Naive thymus-derived CD8-positive, alpha-beta T cell (primary cell): ENCODE measurements at regions of chr2 and their contacts with region 1.

Region 1: GRCh38 chr2:85327822-85328617 is at the start of gene TGOLN2:
- DNase-seq: peak; percentile 89 to 96 (median 94)
- ATAC-seq: peak; percentile 83 to 87
- H3K4me3 Mint-ChIP-seq: peak within 1 kb of the TSS; percentile 96 to 100 (median 99)
- H3K27ac Mint-ChIP-seq: peak within 1 kb of the TSS; percentile 97 to 100 (median 100)
- H3K4me1 Mint-ChIP-seq: peaks cover 27 to 53% (median 42%) of the 10 kb centered on the region in 4 donors
- H3K27me3 Mint-ChIP-seq: no peaks in the 10 kb centered on the region
- polyA plus RNA-seq, gene TGOLN2: 55.6 to 80.0 (median 65.1) TPM

Region 2: GRCh38 chr2:84970868-84971509 is 357.0 kb before region 1 on chr2 and contains the start of gene KCMF1:
- POLR2A ChIA-PET with region 1: interaction called, 12 read pairs
- DNase-seq: peak; percentile 38 to 80 (median 64)
- ATAC-seq: peak; percentile 52 to 53
- H3K4me3 Mint-ChIP-seq: peak within 1 kb of the TSS; percentile 92 to 100 (median 99)
- H3K27ac Mint-ChIP-seq: peak within 1 kb of the TSS; percentile 97 to 100 (median 99)
- H3K4me1 Mint-ChIP-seq: peaks cover 28 to 67% (median 62%) of the 10 kb centered on the region in 4 donors
- H3K27me3 Mint-ChIP-seq: no peaks in the 10 kb centered on the region
- polyA plus RNA-seq, gene KCMF1: 13.3 to 30.2 (median 28.1) TPM

Region 3: GRCh38 chr2:85175369-85176299 is 152.4 kb before region 1 on chr2:
- POLR2A ChIA-PET with region 1: no interaction called
- DNase-seq: no peak
- ATAC-seq: no peak
- H3K4me3 Mint-ChIP-seq: no peak overlapping the region
- H3K27ac Mint-ChIP-seq: peak overlapping the region in 1 of 10 donors; percentile 1
- H3K4me1 Mint-ChIP-seq: peaks cover 0 to 2% (median 0%) of the 10 kb centered on the region in 4 donors
- H3K27me3 Mint-ChIP-seq: peaks cover 0 to 9% (median 4%) of the 10 kb centered on the region in 5 donors

Region 4: GRCh38 chr2:85302121-85302520 is 25.9 kb before region 1 on chr2:
- POLR2A ChIA-PET with region 1: interaction called, 17 read pairs
- DNase-seq: no peak
- ATAC-seq: no peak
- H3K4me3 Mint-ChIP-seq: no peak overlapping the region
- H3K27ac Mint-ChIP-seq: no peak overlapping the region
- H3K4me1 Mint-ChIP-seq: peaks cover 5 to 23% (median 14%) of the 10 kb centered on the region in 4 donors
- H3K27me3 Mint-ChIP-seq: peaks cover 0 to 5% (median 0%) of the 10 kb centered on the region in 5 donors

Region 5: GRCh38 chr2:85308896-85309555 is 19.0 kb before region 1 on chr2:
- POLR2A ChIA-PET with region 1: interaction called, 77 read pairs
- DNase-seq: peak in 1 of 10 donors; percentile 22
- ATAC-seq: peak; percentile 22 to 30
- H3K4me3 Mint-ChIP-seq: peak overlapping the region; percentile 77 to 91 (median 84)
- H3K27ac Mint-ChIP-seq: peak overlapping the region; percentile 92 to 98 (median 96)
- H3K4me1 Mint-ChIP-seq: peaks cover 24 to 65% (median 46%) of the 10 kb centered on the region in 4 donors
- H3K27me3 Mint-ChIP-seq: no peaks in the 10 kb centered on the region

Region 6: DNA sequence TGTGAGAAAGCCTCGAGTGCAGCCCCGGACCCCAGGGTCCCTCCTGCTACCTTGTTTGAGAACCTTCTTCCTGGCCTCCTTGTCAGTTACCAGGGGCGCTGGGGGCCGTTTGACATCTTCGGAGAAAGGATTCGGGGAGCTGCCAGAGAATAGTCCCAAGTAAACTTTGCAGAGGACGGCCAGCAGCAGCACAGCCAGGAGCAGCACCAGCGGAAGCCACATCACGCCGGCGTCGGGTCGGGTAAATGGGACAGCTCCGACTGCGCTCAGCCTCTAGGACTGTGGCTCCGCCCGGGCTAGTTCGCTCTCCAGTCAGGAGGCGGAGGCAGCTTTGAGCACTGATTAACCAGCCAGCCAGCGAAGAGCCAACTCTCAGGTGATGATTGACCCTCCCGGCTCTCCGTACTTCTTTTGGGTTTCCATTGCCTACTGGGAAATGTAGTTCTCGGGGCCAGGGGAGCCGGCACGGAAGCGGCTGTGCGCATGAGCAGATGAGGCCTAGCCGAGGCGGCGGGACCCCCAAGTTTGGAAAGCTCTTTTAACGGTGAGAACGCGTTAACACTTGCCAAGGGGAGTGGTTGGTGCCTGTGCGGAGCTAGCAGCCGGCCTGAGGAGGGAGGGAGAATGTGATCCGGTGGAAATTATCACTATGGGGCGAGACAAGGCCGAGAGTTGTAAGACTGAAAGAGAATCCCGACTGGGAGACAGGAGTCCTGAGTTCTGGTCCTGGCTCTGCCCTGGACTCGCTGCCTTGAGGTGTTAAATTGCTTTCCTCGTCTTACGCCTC is 26.5 kb after region 1 on chr2 and contains the starts of genes ELMOD3 and RETSAT:
- POLR2A ChIA-PET with region 1: interaction called, 122 read pairs
- DNase-seq: peak; percentile 85 to 99 (median 98)
- ATAC-seq: peak; percentile 98 to 99
- H3K4me3 Mint-ChIP-seq: peak within 1 kb of the TSS; percentile 89 to 100 (median 98)
- H3K27ac Mint-ChIP-seq: peak within 1 kb of the TSS; percentile 95 to 100 (median 99)
- H3K4me1 Mint-ChIP-seq: peaks cover 22 to 68% (median 53%) of the 10 kb centered on the region in 4 donors
- H3K27me3 Mint-ChIP-seq: no peaks in the 10 kb centered on the region
- polyA plus RNA-seq, gene ELMOD3: 6.3 to 14.5 (median 11.8) TPM
- polyA plus RNA-seq, gene RETSAT: 6.6 to 15.1 (median 9.9) TPM

Region 7: DNA sequence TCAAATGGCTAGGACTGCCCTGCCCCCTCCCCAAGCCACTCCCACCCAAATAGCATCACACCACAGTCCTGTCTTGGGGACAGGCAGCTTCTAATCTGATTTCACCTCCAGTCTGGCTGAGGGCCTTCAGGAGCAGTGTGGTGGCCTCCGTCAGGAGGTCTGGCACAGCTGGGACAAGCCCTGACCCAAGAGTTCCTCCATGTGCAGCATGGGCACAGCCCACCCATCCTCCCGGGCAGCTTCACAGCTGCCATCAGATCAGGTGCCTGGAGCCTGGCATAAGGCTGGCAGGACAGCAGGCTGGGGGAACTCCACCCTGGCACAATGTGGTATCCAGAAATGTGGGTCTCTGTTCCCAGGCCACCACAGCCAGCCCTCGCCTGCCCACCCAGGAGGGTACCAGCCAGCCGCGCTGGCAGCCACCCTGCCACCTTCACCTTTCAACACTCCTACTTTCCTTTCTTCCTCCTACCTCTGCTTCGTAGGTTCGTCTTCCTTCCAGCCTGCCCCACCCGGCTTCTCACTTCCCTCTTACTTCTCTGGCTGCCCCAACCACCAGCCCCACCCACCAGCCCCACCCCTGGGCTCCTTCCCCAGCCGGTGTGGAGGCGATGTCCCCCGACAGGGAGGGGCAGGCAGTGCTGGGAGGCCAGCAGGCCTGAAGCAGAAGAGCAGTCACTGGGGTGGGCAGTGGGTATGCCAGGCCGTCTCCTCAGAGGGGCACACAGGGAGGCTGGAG is 82.0 kb after region 1 on chr2 and contains the start of gene CAPG:
- POLR2A ChIA-PET with region 1: interaction called, 11 read pairs
- DNase-seq: peak in 4 of 10 donors; percentile 15 to 63 (median 30)
- ATAC-seq: peak in 1 of 2 donors; percentile 21
- H3K4me3 Mint-ChIP-seq: peak within 1 kb of the TSS; percentile 58 to 82 (median 72)
- H3K27ac Mint-ChIP-seq: peak within 1 kb of the TSS in 9 of 10 donors; percentile 31 to 80 (median 63)
- H3K4me1 Mint-ChIP-seq: peaks cover 30 to 87% (median 64%) of the 10 kb centered on the region in 4 donors
- H3K27me3 Mint-ChIP-seq: peaks cover 0 to 3% (median 0%) of the 10 kb centered on the region in 5 donors
- polyA plus RNA-seq, gene CAPG: 15.7 to 18.6 (median 16.8) TPM

Region 8: DNA sequence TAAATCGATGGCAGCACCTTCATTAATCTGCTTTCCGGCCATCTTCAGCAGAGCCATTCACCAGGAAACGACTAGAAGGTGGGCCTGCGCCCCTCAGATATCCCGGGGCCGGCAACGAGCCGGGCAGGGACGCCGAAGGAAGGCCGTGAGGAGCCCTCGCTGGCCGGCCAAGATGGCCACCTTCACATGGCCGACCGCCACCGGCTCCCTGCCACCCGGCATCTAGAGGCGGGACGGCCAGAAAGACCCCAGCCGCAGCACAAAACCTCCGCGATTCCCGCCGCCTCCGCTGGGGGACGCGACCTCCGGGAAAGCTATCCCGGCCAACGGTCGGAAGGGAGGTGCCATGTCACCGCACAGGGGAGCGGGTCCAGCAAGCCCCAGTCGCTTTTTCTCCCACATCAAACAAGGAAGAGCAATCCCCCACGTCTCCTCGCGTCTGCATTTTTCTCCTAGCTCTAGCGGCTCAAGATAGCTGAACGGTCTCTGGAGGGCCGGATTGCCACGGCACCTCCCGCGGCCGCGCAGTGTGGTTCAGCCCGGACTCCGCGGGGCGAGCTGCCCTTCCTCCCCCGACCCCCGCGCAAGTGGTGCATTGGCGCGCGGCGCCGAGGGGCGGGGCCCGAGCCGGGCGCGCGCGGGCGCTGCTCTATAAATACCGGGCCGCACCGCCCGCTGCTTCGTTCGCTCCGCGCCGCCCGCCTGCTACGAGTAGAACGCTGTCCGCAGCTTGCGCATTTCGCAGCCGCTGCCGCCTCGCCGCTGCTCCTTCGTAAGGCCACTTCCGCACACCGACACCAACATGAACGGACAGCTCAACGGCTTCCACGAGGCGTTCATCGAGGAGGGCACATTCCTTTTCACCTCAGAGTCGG is 210.7 kb after region 1 on chr2 and contains the start of gene MAT2A:
- POLR2A ChIA-PET with region 1: interaction called, 48 read pairs
- DNase-seq: peak; percentile 71 to 91 (median 86)
- ATAC-seq: peak; percentile 74 to 76
- H3K4me3 Mint-ChIP-seq: peak within 1 kb of the TSS; percentile 91 to 96 (median 95)
- H3K27ac Mint-ChIP-seq: peak within 1 kb of the TSS; percentile 90 to 98 (median 95)
- H3K4me1 Mint-ChIP-seq: peaks cover 21 to 50% (median 40%) of the 10 kb centered on the region in 4 donors
- H3K27me3 Mint-ChIP-seq: no peaks in the 10 kb centered on the region
- polyA plus RNA-seq, gene MAT2A: 68.1 to 103 (median 73.0) TPM